ENCODE measurements at regions of chr16 and their contacts with region 1.

Region 1: GRCh38 chr16:84726079-84726668 is 26.4 kb downstream of the USP10 start:
- DNase-seq: peak; percentile 91
- H3K4me3 Mint-ChIP-seq: no peak overlapping the region
- H3K27ac Mint-ChIP-seq: no peak overlapping the region
- H3K4me1 Mint-ChIP-seq: peaks cover 74% of the 10 kb centered on the region
- H3K27me3 Mint-ChIP-seq: no peaks in the 10 kb centered on the region

Region 2: DNA sequence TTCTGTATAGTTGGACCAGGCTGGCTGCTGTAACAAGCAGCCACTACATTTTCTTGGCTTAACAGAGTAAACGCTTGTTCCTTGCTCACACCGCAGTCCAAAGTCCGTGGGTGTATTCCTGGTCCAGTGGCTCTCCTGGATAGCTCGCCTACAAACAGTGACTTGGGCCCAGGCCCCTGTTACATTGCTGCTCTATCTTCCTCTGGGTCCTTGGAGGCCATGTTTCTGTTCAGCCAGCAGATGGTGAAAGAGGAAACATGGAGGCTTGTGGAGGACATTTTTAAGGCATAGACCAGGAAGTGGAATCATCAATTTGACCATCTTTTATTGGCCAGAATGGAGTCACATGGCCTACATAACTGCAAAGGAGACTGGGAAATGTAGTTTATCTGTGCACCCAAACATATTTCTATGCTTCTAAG is 302.7 kb before region 1 on chr16:
- CTCF ChIA-PET with region 1: no interaction called
- intact Hi-C with region 1: no loop called
- DNase-seq: no peak
- H3K4me3 Mint-ChIP-seq: no peak overlapping the region
- H3K27ac Mint-ChIP-seq: no peak overlapping the region
- H3K4me1 Mint-ChIP-seq: no peaks in the 10 kb centered on the region
- H3K27me3 Mint-ChIP-seq: no peaks in the 10 kb centered on the region

Region 3: GRCh38 chr16:84511180-84511824 is 214.9 kb before region 1 on chr16:
- CTCF ChIA-PET with region 1: interaction called, 9 read pairs
- intact Hi-C with region 1: loop called (anchors 2 kb)
- DNase-seq: peak; percentile 86
- H3K4me3 Mint-ChIP-seq: no peak overlapping the region
- H3K27ac Mint-ChIP-seq: no peak overlapping the region
- H3K4me1 Mint-ChIP-seq: peaks cover 64% of the 10 kb centered on the region
- H3K27me3 Mint-ChIP-seq: no peaks in the 10 kb centered on the region

Region 4: DNA sequence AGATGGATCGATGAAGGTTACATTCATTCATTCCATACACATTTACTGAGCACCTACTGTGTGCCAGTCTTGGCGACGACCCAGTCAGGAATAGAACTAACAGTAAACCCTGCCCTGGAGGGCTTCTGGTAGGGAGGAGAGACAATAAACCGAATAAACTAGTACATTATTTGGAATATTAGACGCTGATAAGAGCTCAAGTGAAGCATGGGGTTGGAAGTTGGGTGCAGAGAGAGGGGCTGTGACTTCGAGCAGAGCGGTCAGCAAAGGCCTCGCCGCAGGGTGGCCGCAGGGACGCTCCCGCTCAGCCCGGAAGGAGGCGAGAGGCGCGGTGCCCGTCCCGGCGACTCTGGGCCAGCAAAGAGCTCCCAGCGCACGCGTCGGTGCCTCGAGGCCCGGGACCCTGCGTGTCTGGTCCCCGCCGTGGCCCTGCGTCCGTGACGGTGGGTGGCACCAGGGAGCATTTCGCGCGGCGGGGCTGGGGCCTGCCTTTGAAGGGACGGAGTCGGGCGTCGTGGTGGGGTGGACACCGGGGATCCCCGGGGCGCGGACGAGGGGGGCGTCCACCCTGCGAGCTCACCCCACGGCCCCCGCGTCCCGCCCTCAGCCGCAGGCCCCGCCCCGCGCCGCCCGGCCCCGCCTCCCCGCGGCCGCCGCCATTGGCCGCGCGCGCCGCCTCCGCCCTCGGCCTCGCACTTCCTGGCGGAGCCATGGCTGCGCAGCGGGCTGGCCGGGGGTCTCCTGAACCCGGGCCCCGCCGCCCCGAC is 78.2 kb before region 1 on chr16 and contains the start of gene KLHL36:
- CTCF ChIA-PET with region 1: interaction called, 15 read pairs
- intact Hi-C with region 1: loop called (anchors 5 kb)
- DNase-seq: peak; percentile 62
- H3K4me3 Mint-ChIP-seq: peak within 1 kb of the TSS; percentile 76
- H3K27ac Mint-ChIP-seq: peak within 1 kb of the TSS; percentile 51
- H3K4me1 Mint-ChIP-seq: peaks cover 42% of the 10 kb centered on the region
- H3K27me3 Mint-ChIP-seq: no peaks in the 10 kb centered on the region
- total RNA-seq, gene KLHL36: 45.7 to 50.3 TPM

Region 5: DNA sequence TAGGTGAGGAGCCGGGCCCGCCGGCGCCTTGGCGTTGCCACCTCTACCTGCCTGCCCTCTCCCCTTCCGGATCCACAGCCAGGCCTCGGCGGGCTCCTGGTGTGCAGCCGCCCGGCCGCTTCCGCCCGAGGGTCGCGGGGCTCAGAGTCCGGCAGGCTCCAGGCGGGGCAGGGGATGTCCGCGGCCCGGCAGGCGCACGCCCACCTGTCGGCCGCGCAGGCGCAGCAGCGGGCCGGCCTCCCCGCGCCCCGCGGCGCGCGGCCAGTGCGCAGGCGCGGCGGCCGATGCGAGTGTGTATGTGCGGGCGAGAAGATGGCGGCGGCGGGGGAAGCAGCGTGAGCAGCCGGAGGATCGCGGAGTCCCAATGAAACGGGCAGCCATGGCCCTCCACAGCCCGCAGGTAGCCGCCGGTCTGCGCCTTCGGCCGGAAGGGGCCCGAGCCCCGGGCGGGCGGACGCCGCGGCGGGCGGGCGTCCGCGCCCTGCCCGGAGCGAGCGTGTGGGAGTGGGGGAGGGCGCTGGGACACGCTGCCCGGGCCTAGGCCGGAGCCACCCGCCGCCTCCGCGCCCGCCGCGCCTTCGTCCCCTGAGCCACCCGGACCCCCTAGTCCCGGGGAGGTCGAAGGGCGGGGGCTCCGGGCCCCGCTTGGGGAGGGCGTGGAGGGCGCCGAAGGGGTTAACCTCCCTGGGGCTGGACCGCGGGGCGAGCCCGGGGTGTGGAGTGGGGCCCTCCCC is 26.3 kb before region 1 on chr16 and contains the start of gene USP10:
- CTCF ChIA-PET with region 1: interaction called, 20 read pairs
- intact Hi-C with region 1: loop called (anchors 1 kb)
- DNase-seq: peak; percentile 80
- H3K4me3 Mint-ChIP-seq: peak within 1 kb of the TSS; percentile 95
- H3K27ac Mint-ChIP-seq: peak within 1 kb of the TSS; percentile 95
- H3K4me1 Mint-ChIP-seq: peaks cover 31% of the 10 kb centered on the region
- H3K27me3 Mint-ChIP-seq: no peaks in the 10 kb centered on the region
- total RNA-seq, gene USP10: 93.9 to 95.2 TPM

Region 6: GRCh38 chr16:84714028-84714427 is 12.1 kb before region 1 on chr16:
- CTCF ChIA-PET with region 1: interaction called, 45 read pairs
- intact Hi-C with region 1: no loop called
- DNase-seq: no peak
- H3K4me3 Mint-ChIP-seq: no peak overlapping the region
- H3K27ac Mint-ChIP-seq: no peak overlapping the region
- H3K4me1 Mint-ChIP-seq: peaks cover 77% of the 10 kb centered on the region
- H3K27me3 Mint-ChIP-seq: no peaks in the 10 kb centered on the region

Measured in activated naive CD4-positive, alpha-beta T cell treated with anti-CD3 and anti-CD28 coated beads for 36 hours (primary cell).